ENCODE measurements at regions of chr2 and their contacts with region 1.

Region 1: DNA sequence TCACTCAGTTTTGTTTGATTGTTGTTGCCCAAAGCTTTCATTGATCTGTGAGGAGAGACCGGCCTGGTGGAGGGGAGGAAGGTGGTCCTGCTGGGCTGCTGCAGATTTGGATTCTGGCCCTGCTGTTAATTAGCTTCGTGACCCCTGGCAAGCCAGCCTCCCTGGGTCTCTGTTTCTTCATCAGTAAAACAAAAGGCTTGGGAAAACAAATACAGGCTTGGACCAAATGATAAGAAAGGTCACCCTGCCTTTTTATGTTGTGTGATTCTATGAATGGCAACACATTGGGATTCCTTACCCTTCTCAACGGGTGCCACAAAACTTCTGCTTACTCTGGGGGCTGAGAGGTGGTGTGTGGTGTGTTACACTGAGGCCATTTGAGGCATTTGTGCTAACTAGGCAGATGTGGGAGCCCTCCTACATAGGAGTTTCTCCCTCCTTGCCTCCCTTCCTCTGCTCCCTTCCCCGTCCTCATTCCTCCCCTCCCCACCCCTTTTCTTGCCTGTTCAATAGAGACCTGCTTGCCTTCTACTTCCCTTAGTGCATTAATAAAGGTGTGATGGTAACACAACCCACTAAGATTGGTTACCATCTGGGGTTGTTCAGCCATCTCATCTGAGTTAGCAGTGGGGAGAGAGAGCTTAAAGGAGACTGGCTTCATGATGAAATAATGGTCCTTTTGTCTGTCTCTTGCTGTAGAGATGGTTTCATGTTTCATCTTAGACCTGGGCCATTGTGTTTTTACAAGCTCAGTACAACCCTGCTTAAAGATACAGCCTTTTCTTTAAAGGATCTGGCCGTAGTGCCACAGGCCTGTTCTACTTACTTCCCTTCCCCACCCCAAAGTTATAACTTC is 96.2 kb downstream of the TANC1 start:
- DNase-seq: peak; percentile 43
- H3K4me3 ChIP-seq: no peak overlapping the region
- H3K27ac ChIP-seq: peak overlapping the region; percentile 42
- H3K27me3 ChIP-seq: no peaks in the 10 kb centered on the region
- CTCF ChIP-seq: no peak

Region 2: GRCh38 chr2:158968396-158969161 is 96.1 kb before region 1 on chr2 and contains the start of gene TANC1:
- in situ Hi-C with region 1: loop called (anchors 25 kb)
- DNase-seq: peak; percentile 89
- H3K4me3 ChIP-seq: peak within 1 kb of the TSS; percentile 81
- H3K27ac ChIP-seq: peak within 1 kb of the TSS; percentile 77
- H3K27me3 ChIP-seq: no peaks in the 10 kb centered on the region
- CTCF ChIP-seq: no peak

Region 3: DNA sequence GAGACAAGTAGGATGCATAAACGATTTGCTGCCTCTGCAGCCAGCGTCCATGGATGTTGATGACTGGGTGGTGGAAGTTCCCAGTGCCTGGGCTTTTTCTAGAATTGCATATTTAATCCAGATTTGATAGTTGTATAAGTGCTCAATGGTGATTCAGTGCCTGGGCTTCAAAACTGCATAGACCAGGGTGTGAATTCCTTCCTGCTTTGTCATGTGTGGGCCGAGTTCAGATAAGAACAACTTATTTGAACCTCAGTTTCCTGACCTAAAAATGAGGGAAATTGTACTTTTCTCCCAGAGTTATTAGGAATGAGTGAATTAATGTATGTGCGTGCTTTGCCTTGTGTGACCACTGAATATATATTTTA is 67.2 kb after region 1 on chr2:
- in situ Hi-C with region 1: no loop called
- DNase-seq: peak; percentile 98
- H3K4me3 ChIP-seq: no peak overlapping the region
- H3K27ac ChIP-seq: peak overlapping the region; percentile 100
- H3K27me3 ChIP-seq: no peaks in the 10 kb centered on the region
- CTCF ChIP-seq: no peak